Right lobe of liver (tissue), 6 donors: ENCODE measurements at regions of chr18 and their contacts with region 1.

Region 1: GRCh38 chr18:35240664-35241447 is at the start of gene ZNF397:
- DNase-seq: peak; percentile 98 to 99 (median 99)
- ATAC-seq: peak; percentile 99 to 100 (median 99)
- H3K4me3 ChIP-seq: peak within 1 kb of the TSS; percentile 61 to 84 (median 77)
- H3K27ac ChIP-seq: peak within 1 kb of the TSS; percentile 96 to 99 (median 98)
- H3K4me1 ChIP-seq: peaks cover 0 to 4% (median 0%) of the 10 kb centered on the region in 4 donors
- H3K27me3 ChIP-seq: no peaks in the 10 kb centered on the region
- CTCF ChIP-seq: no peak
- POLR2A ChIP-seq: peak; percentile 98
- total RNA-seq, gene ZNF397: 9.1 to 13.1 (median 10.9) TPM

Region 2: GRCh38 chr18:35290073-35290735 is 49.3 kb after region 1 on chr18 and contains the start of gene ZSCAN30:
- intact Hi-C with region 1: loop called in 1 of 2 experiments (anchors 10 kb)
- DNase-seq: peak; percentile 96 to 97 (median 96)
- ATAC-seq: peak; percentile 99 to 100 (median 99)
- H3K4me3 ChIP-seq: peak within 1 kb of the TSS; percentile 69 to 83 (median 76)
- H3K27ac ChIP-seq: peak within 1 kb of the TSS; percentile 78 to 84 (median 80)
- H3K4me1 ChIP-seq: peaks cover 0 to 22% (median 2%) of the 10 kb centered on the region in 4 donors
- H3K27me3 ChIP-seq: no peaks in the 10 kb centered on the region
- CTCF ChIP-seq: no peak
- POLR2A ChIP-seq: peak; percentile 71
- total RNA-seq, gene ZSCAN30: 4.3 to 6.0 (median 5.0) TPM

Region 3: DNA sequence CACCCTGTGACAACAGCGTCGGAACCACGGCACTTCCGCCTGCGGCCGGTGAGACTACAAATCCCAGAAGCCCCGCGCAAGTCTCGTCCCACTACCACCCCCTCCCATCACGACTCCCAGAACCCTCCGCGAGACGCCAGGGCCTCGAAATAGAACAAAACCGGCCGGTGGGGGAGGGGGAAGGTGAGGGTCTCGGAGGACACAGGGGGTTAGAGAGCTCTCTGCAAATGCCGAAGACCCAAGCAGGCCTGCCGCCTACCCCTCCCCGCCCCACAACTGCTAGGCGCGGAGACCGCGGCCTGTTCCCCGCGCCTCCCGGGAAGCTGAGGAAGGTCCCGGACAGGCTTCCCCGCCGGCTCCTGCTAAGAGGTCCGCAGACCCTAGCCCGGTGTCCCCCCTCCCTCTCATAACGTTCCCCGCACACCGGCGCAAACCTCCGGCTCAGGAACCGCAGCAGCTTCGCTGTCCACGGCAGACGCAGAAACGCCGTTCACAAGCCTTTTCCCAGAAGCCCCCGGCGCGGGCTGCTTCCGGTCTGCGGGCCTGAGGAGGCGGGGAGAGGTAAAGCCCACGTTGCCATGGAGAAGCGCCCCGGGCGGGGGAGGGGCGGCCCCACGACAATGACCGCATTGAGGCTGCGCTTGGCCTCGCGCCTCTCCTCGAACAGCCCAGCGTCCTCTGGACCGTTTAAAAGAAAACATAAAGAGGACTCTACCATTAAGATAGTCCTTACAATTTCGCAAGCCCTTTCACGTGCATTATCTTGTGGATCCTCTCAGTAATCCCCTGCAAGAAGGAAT is 103.3 kb after region 1 on chr18 and contains the start of gene ZNF24:
- intact Hi-C with region 1: loop called in 1 of 2 experiments (anchors 10 kb)
- DNase-seq: peak; percentile 97 to 99 (median 99)
- ATAC-seq: peak; percentile 90 to 95 (median 92)
- H3K4me3 ChIP-seq: peak within 1 kb of the TSS; percentile 79 to 92 (median 88)
- H3K27ac ChIP-seq: peak within 1 kb of the TSS; percentile 98 to 99 (median 98)
- H3K4me1 ChIP-seq: peaks cover 0 to 17% (median 0%) of the 10 kb centered on the region in 4 donors
- H3K27me3 ChIP-seq: no peaks in the 10 kb centered on the region
- CTCF ChIP-seq: no peak
- POLR2A ChIP-seq: peak; percentile 90
- total RNA-seq, gene ZNF24: 17.7 to 31.5 (median 25.5) TPM